ENCODE measurements at regions of chr15 and their contacts with region 1.

Region 1: DNA sequence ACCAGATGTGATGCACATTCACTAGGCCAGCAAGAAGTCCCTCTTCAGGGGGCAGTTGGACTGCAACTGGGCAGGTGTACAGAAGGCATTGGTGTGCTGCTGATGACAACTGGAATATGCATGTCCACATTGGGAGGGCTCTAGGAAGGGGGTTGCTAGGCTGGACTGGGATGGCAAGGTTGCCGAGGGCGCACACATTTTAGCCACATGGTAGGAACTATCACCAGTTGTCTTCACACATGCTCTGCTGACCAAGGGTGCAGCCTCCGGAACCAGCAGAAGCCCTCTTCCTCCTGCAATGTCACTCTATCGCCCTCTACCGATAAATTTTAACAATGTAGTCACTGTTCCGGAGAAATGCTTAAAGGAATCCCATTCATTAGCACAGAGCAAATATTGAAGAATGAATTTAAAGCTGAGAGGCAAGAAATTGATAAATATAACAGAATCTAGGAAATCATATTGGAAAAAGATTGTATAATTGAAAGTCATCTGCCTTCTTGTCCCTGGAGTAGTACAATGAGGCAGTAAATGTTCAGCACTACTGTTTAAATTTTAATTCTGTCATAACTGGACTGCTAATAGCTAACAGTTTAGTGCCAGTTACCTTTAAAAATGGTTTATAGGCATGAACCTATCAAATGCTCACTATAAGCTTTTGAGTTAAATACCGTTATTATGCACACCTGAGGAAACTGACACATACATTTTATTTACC is 22.6 kb upstream of the LYSMD4 start:
- DNase-seq: peak; percentile 56
- ATAC-seq: peak; percentile 97
- H3K4me3 ChIP-seq: no peak overlapping the region
- H3K27ac ChIP-seq: no peak overlapping the region
- H3K4me1 ChIP-seq: no peaks in the 10 kb centered on the region; a peak in 1 of 4 replicates
- H3K27me3 ChIP-seq: no peaks in the 10 kb centered on the region
- CTCF ChIP-seq: peak; percentile 74 to 89 (median 85)
- POLR2A ChIP-seq: no peak
- RAD21 ChIP-seq: peak; percentile 92

Region 2: GRCh38 chr15:99104788-99105513 is 650.9 kb before region 1 on chr15 and contains the start of gene SYNM:
- CTCF ChIA-PET with region 1: interaction called, 4 read pairs
- POLR2A ChIA-PET with region 1: no interaction called
- RAD21 ChIA-PET with region 1: no interaction called
- intact Hi-C with region 1: loop called (anchors 10 kb)
- DNase-seq: peak; percentile 77
- ATAC-seq: peak; percentile 92
- H3K4me3 ChIP-seq: peak within 1 kb of the TSS; percentile 36 to 49
- H3K27ac ChIP-seq: peak within 1 kb of the TSS; percentile 44; the same call in 1 of the 2 replicates
- H3K4me1 ChIP-seq: peaks cover 3 to 15% of the 10 kb centered on the region in 2 experiments; a peak in 3 of 4 replicates
- H3K27me3 ChIP-seq: no peaks in the 10 kb centered on the region
- CTCF ChIP-seq: peak; percentile 70 to 76 (median 74)
- POLR2A ChIP-seq: peak; percentile 29
- RAD21 ChIP-seq: peak; percentile 74
- total RNA-seq, gene SYNM: 3.3 TPM

Region 3: GRCh38 chr15:99275525-99276128 is 480.2 kb before region 1 on chr15:
- CTCF ChIA-PET with region 1: interaction called, 41 read pairs
- POLR2A ChIA-PET with region 1: no interaction called
- RAD21 ChIA-PET with region 1: interaction called in 1 of 2 experiments, 4 read pairs
- intact Hi-C with region 1: loop called (anchors 5 kb)
- DNase-seq: no peak
- ATAC-seq: no peak
- H3K4me3 ChIP-seq: no peak overlapping the region
- H3K27ac ChIP-seq: no peak overlapping the region
- H3K4me1 ChIP-seq: no peaks in the 10 kb centered on the region
- H3K27me3 ChIP-seq: no peaks in the 10 kb centered on the region
- CTCF ChIP-seq: no peak
- POLR2A ChIP-seq: no peak
- RAD21 ChIP-seq: no peak

Region 4: DNA sequence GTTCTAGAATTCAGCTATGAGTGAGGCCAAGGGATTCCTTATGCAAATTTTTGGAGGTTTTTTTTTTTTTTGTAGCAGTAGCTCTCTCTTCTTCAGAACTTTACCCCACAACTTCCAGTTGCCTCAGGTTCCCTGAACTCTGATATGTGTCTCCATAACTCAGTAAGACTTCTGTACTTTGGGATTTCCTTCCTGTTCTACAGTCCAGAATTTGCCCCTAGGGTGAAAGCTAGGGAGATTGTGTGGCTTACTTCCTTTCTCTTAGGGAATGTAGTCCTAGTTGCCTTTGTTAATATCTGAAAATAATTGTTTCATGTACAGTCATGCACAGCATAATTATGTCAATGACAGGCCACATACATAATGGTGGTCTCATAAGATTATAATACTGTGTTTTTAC is 473.7 kb before region 1 on chr15:
- CTCF ChIA-PET with region 1: interaction called, 9 read pairs
- POLR2A ChIA-PET with region 1: no interaction called
- RAD21 ChIA-PET with region 1: no interaction called
- intact Hi-C with region 1: loop called (anchors 1 kb)
- DNase-seq: no peak
- ATAC-seq: no peak
- H3K4me3 ChIP-seq: no peak overlapping the region
- H3K27ac ChIP-seq: no peak overlapping the region
- H3K4me1 ChIP-seq: no peaks in the 10 kb centered on the region
- H3K27me3 ChIP-seq: no peaks in the 10 kb centered on the region
- CTCF ChIP-seq: no peak
- POLR2A ChIP-seq: no peak
- RAD21 ChIP-seq: no peak

Region 5: GRCh38 chr15:99733268-99734039 is 22.4 kb before region 1 on chr15 and contains the start of gene LYSMD4:
- CTCF ChIA-PET with region 1: interaction called, 10 read pairs
- POLR2A ChIA-PET with region 1: interaction called, 5 read pairs
- RAD21 ChIA-PET with region 1: interaction called in 1 of 2 experiments, 3 read pairs
- intact Hi-C with region 1: no loop called
- DNase-seq: peak; percentile 84
- ATAC-seq: peak; percentile 100
- H3K4me3 ChIP-seq: peak within 1 kb of the TSS; percentile 64 to 73
- H3K27ac ChIP-seq: peak within 1 kb of the TSS; percentile 59
- H3K4me1 ChIP-seq: peaks cover 3 to 13% of the 10 kb centered on the region in 2 experiments; a peak in 3 of 4 replicates
- H3K27me3 ChIP-seq: no peaks in the 10 kb centered on the region
- CTCF ChIP-seq: no peak
- POLR2A ChIP-seq: no peak
- RAD21 ChIP-seq: no peak
- total RNA-seq, gene LYSMD4: 8.6 TPM